Calu3 (cell line): ENCODE measurements at regions of chr20 and their contacts with region 1.

Region 1: DNA sequence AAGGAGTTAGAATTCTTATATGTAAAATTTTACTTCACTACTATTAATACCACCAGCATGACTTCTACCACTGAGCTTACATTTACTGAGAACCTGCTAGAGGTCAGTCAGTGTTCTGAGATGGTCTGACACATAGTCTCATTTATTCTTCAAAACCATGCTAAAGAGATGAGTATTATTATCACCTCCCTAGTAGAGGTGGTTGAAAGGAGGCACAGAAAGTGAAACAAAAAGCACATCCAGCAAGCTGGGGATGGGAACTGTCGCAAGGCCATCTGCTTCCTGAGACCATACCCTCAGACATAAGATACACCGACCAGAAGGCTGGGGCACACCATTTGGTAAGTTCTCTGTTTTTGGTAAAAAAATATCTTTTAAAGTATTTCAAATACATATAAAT is 137.7 kb downstream of the INSM1 start:
- DNase-seq: no peak
- H3K4me3 Mint-ChIP-seq: no peak overlapping the region
- H3K27ac Mint-ChIP-seq: no peak overlapping the region
- H3K4me1 Mint-ChIP-seq: no peaks in the 10 kb centered on the region
- H3K27me3 Mint-ChIP-seq: no peaks in the 10 kb centered on the region
- CTCF ChIP-seq: no peak

Region 2: DNA sequence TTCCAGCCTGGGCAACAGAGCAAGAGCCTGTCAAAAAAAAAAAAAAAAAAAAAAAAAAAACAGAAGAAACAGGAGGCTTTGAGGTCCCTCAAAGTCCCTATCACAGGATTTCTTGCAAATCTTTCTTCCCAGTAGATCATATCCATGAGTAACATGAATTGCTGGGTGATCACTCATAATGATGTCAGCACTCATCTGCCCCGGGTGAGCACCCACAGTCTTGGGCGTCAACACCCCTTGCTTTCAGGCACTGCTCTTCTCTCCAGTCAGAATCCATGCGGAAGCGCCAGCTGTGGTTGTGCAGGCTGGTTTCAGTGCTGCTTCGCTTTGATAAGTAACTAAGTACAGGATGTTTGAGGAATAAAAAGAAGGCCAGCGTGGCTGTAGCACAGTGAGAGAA is 177.8 kb before region 1 on chr20:
- CTCF ChIA-PET with region 1: no interaction called
- intact Hi-C with region 1: no loop called
- DNase-seq: no peak
- H3K4me3 Mint-ChIP-seq: no peak overlapping the region
- H3K27ac Mint-ChIP-seq: no peak overlapping the region
- H3K4me1 Mint-ChIP-seq: no peaks in the 10 kb centered on the region
- H3K27me3 Mint-ChIP-seq: peaks cover 11% of the 10 kb centered on the region
- CTCF ChIP-seq: no peak

Region 3: GRCh38 chr20:20568604-20569205 is 63.2 kb after region 1 on chr20:
- CTCF ChIA-PET with region 1: no interaction called
- intact Hi-C with region 1: loop called (anchors 10 kb)
- DNase-seq: peak; percentile 1
- H3K4me3 Mint-ChIP-seq: no peak overlapping the region
- H3K27ac Mint-ChIP-seq: no peak overlapping the region
- H3K4me1 Mint-ChIP-seq: no peaks in the 10 kb centered on the region
- H3K27me3 Mint-ChIP-seq: no peaks in the 10 kb centered on the region
- CTCF ChIP-seq: no peak